ENCODE measurements at regions of chr7 and their contacts with region 1.

Region 1: DNA sequence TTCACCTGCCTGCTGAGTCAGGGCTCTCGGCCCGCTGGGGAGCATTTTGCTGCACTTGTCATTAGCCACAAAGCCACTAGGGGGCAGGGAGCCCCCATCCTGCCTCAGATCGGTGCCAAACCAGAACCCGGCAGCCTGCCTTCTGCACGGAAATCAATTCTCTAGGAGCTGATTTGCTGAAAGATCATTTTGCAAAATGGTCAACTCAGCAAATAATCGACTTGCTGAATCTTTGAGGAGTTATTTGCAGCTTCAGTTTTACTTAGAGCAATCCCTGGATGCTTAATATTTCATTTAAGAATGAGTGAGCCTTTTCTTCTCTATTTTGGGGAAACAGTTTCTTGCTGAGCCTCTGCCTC is 1.7 kb upstream of the GIMAP8 start:
- DNase-seq: peak; percentile 80
- H3K4me3 ChIP-seq: no peak overlapping the region
- H3K27ac ChIP-seq: no peak overlapping the region
- H3K4me1 ChIP-seq: peaks cover 3% of the 10 kb centered on the region
- H3K27me3 ChIP-seq: no peaks in the 10 kb centered on the region
- CTCF ChIP-seq: peak; percentile 70 to 85 (median 75)
- POLR2A ChIP-seq: no peak

Region 2: DNA sequence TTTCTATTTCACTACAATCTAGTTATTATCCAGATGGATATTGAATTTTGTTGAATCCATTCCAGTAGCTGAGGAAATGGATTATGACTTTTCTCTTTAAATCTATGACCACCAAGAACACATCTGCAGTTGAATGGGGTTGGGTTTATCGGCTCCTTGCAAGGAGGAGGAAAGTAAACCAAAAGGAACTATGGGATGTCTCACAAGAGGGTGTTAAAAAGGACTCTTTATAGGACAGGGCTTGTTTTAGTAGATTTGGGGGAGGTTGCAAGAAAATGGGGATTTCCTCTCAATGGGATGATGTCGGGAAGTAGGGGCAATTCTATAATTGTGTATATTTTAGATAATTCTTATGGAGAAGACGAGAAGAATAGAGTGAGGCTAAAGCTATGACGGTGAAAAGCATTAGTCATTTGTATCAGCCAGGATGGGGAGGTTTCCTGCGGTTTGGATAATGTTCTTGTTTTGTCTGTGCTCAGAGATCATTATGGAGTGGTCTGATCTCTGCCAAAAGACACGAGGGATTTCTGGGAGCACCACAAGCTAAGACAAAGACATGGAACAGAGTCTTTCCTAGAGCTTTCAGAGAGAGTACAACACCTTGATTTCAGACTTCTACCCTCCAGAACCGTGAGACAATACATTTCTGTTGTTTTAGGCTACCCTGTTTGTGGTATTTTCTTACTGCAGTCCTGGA is 130.9 kb before region 1 on chr7:
- intact Hi-C with region 1: no loop called
- DNase-seq: no peak
- H3K4me3 ChIP-seq: no peak overlapping the region
- H3K27ac ChIP-seq: no peak overlapping the region
- H3K4me1 ChIP-seq: no peaks in the 10 kb centered on the region
- H3K27me3 ChIP-seq: no peaks in the 10 kb centered on the region
- CTCF ChIP-seq: no peak
- POLR2A ChIP-seq: no peak

Region 3: GRCh38 chr7:150631866-150632864 is 183.4 kb after region 1 on chr7 and contains the start of gene GIMAP6:
- intact Hi-C with region 1: no loop called
- DNase-seq: no peak
- H3K4me3 ChIP-seq: no peak within 1 kb of the TSS
- H3K27ac ChIP-seq: peak within 1 kb of the TSS in 1 of 2 donors; percentile 30
- H3K4me1 ChIP-seq: no peaks in the 10 kb centered on the region
- H3K27me3 ChIP-seq: no peaks in the 10 kb centered on the region
- CTCF ChIP-seq: no peak
- POLR2A ChIP-seq: no peak
- total RNA-seq, gene GIMAP6: 3.9 to 6.1 TPM

Region 4: DNA sequence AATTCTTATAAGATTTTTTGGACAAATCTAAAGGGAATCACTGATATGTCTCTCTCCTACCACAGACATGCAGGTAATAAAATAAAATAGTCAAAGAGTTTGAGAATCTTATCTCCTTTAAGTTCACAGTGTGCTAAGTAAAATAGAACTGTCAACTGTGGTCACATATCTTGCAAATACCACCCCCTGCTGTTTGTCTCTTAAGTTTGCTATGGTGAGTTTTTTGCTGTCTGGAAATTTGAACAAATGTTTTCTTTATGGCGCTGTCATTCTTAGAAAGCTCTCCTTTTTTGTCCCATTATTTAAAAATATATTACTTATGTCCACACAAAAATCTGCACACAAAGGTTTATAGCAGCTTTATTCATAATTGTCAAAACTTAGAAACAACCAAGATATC is 308.1 kb after region 1 on chr7:
- intact Hi-C with region 1: loop called (anchors 5 kb)
- DNase-seq: no peak
- H3K4me3 ChIP-seq: no peak overlapping the region
- H3K27ac ChIP-seq: no peak overlapping the region
- H3K4me1 ChIP-seq: no peaks in the 10 kb centered on the region
- H3K27me3 ChIP-seq: no peaks in the 10 kb centered on the region
- CTCF ChIP-seq: peak in 2 of 3 experiments; percentile 17 to 19
- POLR2A ChIP-seq: no peak